Activated CD4-positive, alpha-beta T cell treated with anti-CD3 and anti-CD28 coated beads for 36 hours (primary cell): ENCODE measurements at regions of chr19 and their contacts with region 1.

Region 1: DNA sequence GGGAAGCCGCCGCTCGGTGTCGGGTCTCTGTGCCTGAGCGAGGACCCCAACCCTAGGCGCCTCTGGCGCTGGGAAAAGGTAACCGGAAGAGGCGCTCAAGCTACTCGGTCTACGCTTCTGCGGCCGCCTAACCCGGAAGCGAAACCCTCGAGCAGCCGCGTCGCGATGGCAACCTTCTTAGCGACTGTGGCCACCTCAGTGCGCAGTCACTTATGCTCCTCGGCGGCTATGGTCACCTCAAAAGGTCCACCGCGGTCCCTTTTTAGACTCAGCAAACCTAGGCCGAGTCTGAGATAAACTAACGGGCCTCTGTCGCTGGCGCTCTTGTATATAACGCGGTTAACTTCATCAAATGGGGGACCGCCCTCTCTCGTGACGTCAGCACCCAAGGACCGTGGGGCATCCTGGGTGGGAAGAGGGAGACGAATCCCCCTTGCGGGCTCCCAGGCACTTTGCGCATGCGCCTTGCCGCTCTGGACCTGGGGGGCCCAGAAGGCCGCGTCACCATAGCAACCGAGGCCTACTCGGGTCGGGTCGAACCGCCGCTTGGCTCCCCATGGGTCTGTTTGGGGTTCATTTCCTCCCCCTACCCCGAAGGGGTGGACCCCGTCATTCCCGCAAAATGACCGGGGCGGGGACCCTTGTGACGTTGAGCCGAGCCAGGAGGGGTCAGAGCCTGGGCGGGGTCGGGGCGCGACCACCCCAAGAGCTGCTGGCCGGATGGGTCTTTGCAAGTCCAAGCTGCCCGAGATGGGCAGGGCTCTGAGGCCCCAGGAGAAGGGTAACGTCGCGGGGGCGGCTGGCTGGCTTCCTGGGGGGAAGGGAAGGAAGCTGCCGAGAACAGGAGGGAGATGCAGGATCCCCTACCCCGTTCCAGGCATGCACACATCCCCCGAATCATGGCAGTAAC is at the start of gene GTF2F1:
- DNase-seq: peak; percentile 96
- ATAC-seq: peak; percentile 89
- H3K4me3 Mint-ChIP-seq: peak within 1 kb of the TSS; percentile 85
- H3K27ac Mint-ChIP-seq: peak within 1 kb of the TSS; percentile 91
- H3K4me1 Mint-ChIP-seq: peaks cover 22% of the 10 kb centered on the region
- H3K27me3 Mint-ChIP-seq: no peaks in the 10 kb centered on the region
- total RNA-seq, gene GTF2F1: 60.9 to 78.5 TPM

Region 2: GRCh38 chr19:5803752-5804515 is 589.4 kb before region 1 on chr19:
- CTCF ChIA-PET with region 1: no interaction called
- POLR2A ChIA-PET with region 1: no interaction called
- intact Hi-C with region 1: loop called in 1 of 2 experiments (anchors 1 kb)
- DNase-seq: peak; percentile 98
- ATAC-seq: peak; percentile 97
- H3K4me3 Mint-ChIP-seq: peak overlapping the region; percentile 63
- H3K27ac Mint-ChIP-seq: peak overlapping the region; percentile 47
- H3K4me1 Mint-ChIP-seq: peaks cover 21% of the 10 kb centered on the region
- H3K27me3 Mint-ChIP-seq: peaks cover 20% of the 10 kb centered on the region

Region 3: GRCh38 chr19:6199240-6199983 is 193.9 kb before region 1 on chr19:
- CTCF ChIA-PET with region 1: no interaction called
- POLR2A ChIA-PET with region 1: no interaction called
- intact Hi-C with region 1: loop called in 1 of 2 experiments (anchors 1 kb)
- DNase-seq: peak; percentile 100
- ATAC-seq: peak; percentile 95
- H3K4me3 Mint-ChIP-seq: peak overlapping the region; percentile 100
- H3K27ac Mint-ChIP-seq: peak overlapping the region; percentile 92
- H3K4me1 Mint-ChIP-seq: peaks cover 12% of the 10 kb centered on the region
- H3K27me3 Mint-ChIP-seq: no peaks in the 10 kb centered on the region

Region 4: DNA sequence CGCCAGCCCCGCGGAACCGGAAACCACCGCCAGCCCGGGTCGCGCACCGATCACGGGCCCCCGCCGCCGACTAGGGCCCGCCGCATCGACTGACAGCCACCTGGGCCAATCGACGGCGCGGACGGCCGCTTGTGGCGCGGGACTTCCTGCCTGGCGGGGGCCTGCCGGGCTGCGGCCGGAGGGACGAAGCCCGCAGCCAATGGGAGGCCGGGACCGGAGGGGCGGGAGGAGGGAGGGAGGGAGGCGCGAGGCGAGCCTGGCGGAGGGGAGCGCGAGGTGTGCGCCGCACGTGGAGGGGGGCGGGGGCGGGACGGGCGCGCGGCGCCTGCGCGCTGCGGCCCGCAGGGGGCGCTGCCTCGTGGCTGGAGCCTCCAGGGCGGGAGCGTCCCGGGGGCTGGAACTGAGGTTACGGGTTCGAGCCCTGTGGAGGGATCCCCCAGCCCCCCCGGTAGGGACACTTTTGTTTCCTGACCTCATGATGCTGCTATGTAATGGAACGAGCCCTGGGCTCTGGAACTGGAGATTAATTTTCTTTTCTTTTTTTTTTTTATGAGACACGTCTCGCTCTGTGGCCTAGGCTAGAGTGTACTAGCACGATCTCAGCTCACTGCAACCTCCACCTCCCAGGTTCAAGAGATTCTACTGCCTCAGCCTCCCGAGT is 113.3 kb before region 1 on chr19 and contains the start of gene MLLT1:
- CTCF ChIA-PET with region 1: no interaction called
- POLR2A ChIA-PET with region 1: no interaction called
- intact Hi-C with region 1: loop called in 1 of 2 experiments (anchors 1 kb)
- DNase-seq: peak; percentile 98
- ATAC-seq: peak; percentile 98
- H3K4me3 Mint-ChIP-seq: peak within 1 kb of the TSS; percentile 98
- H3K27ac Mint-ChIP-seq: peak within 1 kb of the TSS; percentile 93
- H3K4me1 Mint-ChIP-seq: peaks cover 38% of the 10 kb centered on the region
- H3K27me3 Mint-ChIP-seq: peaks cover 2% of the 10 kb centered on the region
- total RNA-seq, gene MLLT1: 45.0 to 46.6 TPM

Region 5: DNA sequence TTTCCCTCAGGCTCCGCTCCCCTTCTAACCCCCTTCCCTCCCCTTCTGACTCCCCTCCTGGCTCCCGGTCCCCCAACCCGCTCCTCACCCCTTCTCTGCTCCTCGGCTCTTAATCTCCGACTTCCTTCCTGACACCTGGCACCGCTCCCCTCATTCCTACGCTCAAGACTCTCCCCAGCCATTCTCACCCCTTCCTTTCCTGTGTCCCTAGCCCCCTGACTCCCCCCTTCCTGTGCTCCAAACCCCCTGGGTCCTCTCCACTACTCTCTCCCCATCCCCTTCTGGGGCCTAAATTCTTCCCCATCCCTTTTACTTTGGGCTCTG is 31.3 kb before region 1 on chr19:
- CTCF ChIA-PET with region 1: interaction called, 4 read pairs
- POLR2A ChIA-PET with region 1: no interaction called
- intact Hi-C with region 1: loop called (anchors 1 kb)
- DNase-seq: no peak
- ATAC-seq: peak; percentile 1
- H3K4me3 Mint-ChIP-seq: peak overlapping the region; percentile 85
- H3K27ac Mint-ChIP-seq: peak overlapping the region; percentile 91
- H3K4me1 Mint-ChIP-seq: peaks cover 16% of the 10 kb centered on the region
- H3K27me3 Mint-ChIP-seq: no peaks in the 10 kb centered on the region

Region 6: DNA sequence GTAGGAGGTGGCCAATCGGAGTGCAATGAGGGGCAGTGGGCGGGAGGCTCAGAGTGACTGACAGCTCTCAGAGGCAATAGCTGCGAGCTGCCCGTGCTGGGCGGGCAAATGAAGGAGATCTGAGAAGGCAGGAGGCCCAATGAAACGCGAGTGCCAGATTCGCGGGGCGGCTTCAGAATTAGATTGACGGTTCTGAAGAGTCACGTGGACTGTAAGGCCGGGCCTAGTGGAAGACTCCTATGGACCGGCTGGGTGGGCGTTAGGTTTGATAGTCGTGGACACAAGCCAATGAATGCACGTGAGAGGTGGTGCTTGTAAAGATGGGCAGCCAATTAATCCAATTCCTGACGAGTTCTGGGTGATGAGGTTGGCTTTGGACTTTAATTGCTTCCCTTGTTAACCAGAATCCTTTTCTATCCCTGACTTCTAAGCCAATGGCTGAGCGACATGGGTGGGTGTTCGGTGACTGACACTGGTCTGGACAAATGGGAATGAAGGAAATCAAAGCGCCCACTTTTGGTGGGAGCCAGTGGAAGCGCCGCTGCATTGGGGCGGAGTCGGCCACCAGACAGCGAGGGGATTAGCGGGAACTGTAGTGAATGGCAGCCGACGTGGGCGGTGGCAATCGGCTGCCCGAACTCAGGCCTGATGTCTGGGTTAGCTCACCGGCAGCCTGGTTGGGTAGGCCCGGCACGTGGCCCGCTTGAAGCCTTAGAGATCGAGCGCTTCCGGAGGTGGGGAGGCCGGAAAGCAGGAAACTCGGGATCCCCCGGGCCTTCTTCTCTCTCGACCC is 31.8 kb after region 1 on chr19:
- CTCF ChIA-PET with region 1: interaction called, 5 read pairs
- POLR2A ChIA-PET with region 1: interaction called, 5 read pairs
- intact Hi-C with region 1: loop called (anchors 1 kb)
- DNase-seq: peak; percentile 100
- ATAC-seq: peak; percentile 88
- H3K4me3 Mint-ChIP-seq: peak overlapping the region; percentile 73
- H3K27ac Mint-ChIP-seq: peak overlapping the region; percentile 98
- H3K4me1 Mint-ChIP-seq: peaks cover 31% of the 10 kb centered on the region
- H3K27me3 Mint-ChIP-seq: no peaks in the 10 kb centered on the region

Region 7: GRCh38 chr19:6476155-6476895 is 83.0 kb after region 1 on chr19:
- CTCF ChIA-PET with region 1: no interaction called
- POLR2A ChIA-PET with region 1: interaction called, 12 read pairs
- intact Hi-C with region 1: no loop called
- DNase-seq: peak; percentile 84
- ATAC-seq: peak; percentile 88
- H3K4me3 Mint-ChIP-seq: no peak overlapping the region
- H3K27ac Mint-ChIP-seq: no peak overlapping the region
- H3K4me1 Mint-ChIP-seq: peaks cover 16% of the 10 kb centered on the region
- H3K27me3 Mint-ChIP-seq: no peaks in the 10 kb centered on the region

Region 8: GRCh38 chr19:6744381-6745291 is 351.3 kb after region 1 on chr19:
- CTCF ChIA-PET with region 1: no interaction called
- POLR2A ChIA-PET with region 1: no interaction called
- intact Hi-C with region 1: no loop called
- DNase-seq: no peak
- ATAC-seq: no peak
- H3K4me3 Mint-ChIP-seq: no peak overlapping the region
- H3K27ac Mint-ChIP-seq: no peak overlapping the region
- H3K4me1 Mint-ChIP-seq: peaks cover 10% of the 10 kb centered on the region
- H3K27me3 Mint-ChIP-seq: no peaks in the 10 kb centered on the region